Activated naive CD4-positive, alpha-beta T cell treated with anti-CD3 and anti-CD28 coated beads, Interleukin-2, amount 10 ng/mL, durations not matched to agents 7 days and 5 days (primary cell): ENCODE measurements at regions of chr6 and their contacts with region 1.

Region 1: DNA sequence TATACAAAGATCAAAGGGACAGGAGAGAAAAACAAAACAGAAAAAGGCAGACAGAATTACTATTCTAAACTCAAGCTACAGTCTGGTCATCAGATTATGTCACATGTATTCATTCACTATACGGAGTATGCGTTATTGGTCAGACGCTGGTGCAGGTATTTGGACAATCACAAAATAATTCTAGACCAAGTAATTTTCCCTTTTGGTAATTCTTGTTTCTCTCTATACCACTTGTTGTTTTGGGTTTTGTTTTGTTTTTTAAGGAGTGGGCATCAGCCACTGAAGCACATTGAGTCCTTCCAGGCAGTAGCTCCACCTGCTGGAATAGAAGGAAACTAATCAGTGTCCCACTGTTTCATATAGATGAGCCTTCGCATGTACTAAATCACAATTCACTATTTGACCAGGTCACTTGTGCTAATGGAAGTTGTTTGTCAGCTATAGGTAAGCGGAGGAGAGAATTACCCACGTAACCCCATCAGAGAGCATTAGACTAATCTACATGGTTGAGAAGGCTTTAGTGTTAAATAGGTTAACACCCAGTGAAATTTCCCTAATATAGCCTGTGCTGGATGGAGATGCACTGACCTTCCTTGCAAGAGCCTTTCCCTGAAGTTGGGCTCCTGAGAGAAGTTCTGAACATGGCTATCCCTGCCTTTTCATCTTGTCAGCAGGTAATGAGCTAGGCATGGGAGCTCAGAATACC is 77.9 kb downstream of the TNFAIP3 start:
- DNase-seq: peak; percentile 42
- H3K4me3 Mint-ChIP-seq: no peak overlapping the region
- H3K27ac Mint-ChIP-seq: no peak overlapping the region
- H3K4me1 Mint-ChIP-seq: peaks cover 23% of the 10 kb centered on the region
- H3K27me3 Mint-ChIP-seq: no peaks in the 10 kb centered on the region

Region 2: GRCh38 chr6:137927777-137928218 is 17.1 kb before region 1 on chr6:
- CTCF ChIA-PET with region 1: interaction called, 16 read pairs
- DNase-seq: peak; percentile 81
- H3K4me3 Mint-ChIP-seq: peak overlapping the region; percentile 42
- H3K27ac Mint-ChIP-seq: peak overlapping the region; percentile 83
- H3K4me1 Mint-ChIP-seq: peaks cover 37% of the 10 kb centered on the region
- H3K27me3 Mint-ChIP-seq: no peaks in the 10 kb centered on the region

Region 3: DNA sequence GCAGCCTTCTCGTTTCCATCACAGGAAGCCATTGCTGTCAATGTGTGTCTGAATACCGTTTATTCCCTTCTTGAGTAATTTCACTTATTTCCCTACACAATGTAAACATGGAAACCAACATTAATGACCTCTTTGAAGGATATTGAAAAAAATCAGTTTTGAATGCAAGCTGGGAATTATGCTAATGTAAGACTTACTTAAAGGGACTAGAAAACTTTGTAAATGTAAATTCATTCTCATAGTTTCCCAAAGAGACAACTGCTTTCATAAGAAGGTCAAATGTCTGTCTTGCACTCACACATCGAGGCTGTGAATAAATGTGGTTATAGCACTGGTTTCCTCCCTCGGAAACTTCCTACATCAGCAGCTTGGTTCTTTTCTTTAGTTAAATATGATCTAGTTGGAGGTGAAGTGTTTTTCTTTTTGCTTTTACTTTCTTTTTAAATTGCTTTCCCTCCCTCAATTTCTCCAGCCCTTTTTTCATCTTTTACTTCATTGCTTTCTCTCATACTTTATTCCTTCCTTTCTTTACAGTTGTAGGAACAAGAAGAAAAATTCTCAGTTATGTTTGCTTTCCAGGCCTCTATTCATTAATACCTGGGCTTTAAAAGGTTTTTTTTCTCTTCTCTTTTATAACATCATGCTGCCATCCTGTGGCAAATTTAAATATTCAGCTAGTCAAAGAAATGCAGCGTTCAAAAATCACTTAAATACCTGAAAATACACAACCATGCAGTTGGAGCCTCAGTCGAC is 30.4 kb after region 1 on chr6:
- CTCF ChIA-PET with region 1: interaction called, 49 read pairs
- DNase-seq: peak; percentile 29
- H3K4me3 Mint-ChIP-seq: peak overlapping the region; percentile 67
- H3K27ac Mint-ChIP-seq: peak overlapping the region; percentile 95
- H3K4me1 Mint-ChIP-seq: peaks cover 40% of the 10 kb centered on the region
- H3K27me3 Mint-ChIP-seq: no peaks in the 10 kb centered on the region